Dorsolateral prefrontal cortex (tissue), 120 donors: ENCODE measurements at regions of chr10 and their contacts with region 1.

Region 1: DNA sequence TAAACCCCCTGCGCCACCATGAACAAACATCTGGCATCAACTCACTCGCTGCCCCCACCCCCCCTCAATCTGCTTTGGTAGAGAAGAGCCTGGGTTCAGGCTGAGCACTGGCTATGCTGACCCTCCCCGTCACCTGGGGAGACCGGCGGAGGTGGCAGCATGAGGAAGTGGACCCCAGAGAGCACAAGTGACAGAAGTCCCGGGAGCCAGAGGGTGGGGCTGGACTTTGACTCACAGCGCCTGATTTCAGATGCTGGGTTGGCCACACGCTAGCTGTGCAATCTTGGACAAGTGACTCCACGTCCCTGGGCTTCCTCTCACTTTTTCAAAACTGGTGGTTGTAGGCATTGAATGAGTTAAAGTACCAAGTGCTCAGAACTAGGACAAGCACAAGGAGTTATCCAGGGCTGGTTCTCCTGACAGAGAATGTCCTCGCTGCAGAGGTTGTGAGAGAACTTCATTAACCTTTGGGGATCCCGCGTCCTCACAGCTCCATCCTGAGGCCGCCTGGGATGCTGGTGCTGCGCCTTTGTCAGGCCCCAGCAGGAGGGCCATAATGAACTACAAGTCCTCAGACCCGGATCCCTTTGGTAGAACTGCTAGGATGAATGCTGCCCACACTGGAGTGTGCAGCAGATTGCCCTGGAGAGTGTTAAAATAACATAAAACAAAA is 48.8 kb upstream of the RASGEF1A start:
- DNase-seq: no peak
- H3K4me3 ChIP-seq: no peak overlapping the region
- H3K27ac ChIP-seq: no peak overlapping the region
- H3K27me3 ChIP-seq: no peaks in the 10 kb centered on the region
- CTCF ChIP-seq: no peak

Region 2: GRCh38 chr10:43255634-43256431 is 59.8 kb before region 1 on chr10:
- intact Hi-C with region 1: loop called in 1 of 2 experiments (anchors 10 kb)
- DNase-seq: peak in 6 of 10 donors; percentile 28 to 49 (median 40)
- H3K4me3 ChIP-seq: no peak overlapping the region
- H3K27ac ChIP-seq: no peak overlapping the region
- H3K27me3 ChIP-seq: no peaks in the 10 kb centered on the region
- CTCF ChIP-seq: peak in 52 of 56 donors; percentile 29 to 68 (median 49)

Region 3: GRCh38 chr10:43340619-43341018 is 24.9 kb after region 1 on chr10:
- intact Hi-C with region 1: no loop called
- DNase-seq: peak in 4 of 10 donors; percentile 42 to 70 (median 60)
- H3K4me3 ChIP-seq: no peak overlapping the region
- H3K27ac ChIP-seq: no peak overlapping the region
- H3K27me3 ChIP-seq: no peaks in the 10 kb centered on the region
- CTCF ChIP-seq: no peak

Region 4: GRCh38 chr10:43390759-43391158 is 75.1 kb after region 1 on chr10:
- intact Hi-C with region 1: no loop called
- DNase-seq: peak in 9 of 10 donors; percentile 16 to 79 (median 73)
- H3K4me3 ChIP-seq: peak overlapping the region in 2 of 59 donors; percentile 3 to 8
- H3K27ac ChIP-seq: peak overlapping the region in 51 of 59 donors; percentile 0 to 90 (median 70)
- H3K27me3 ChIP-seq: no peaks in the 10 kb centered on the region
- CTCF ChIP-seq: peak; percentile 27 to 88 (median 76)